Activated naive CD4-positive, alpha-beta T cell treated with anti-CD3 and anti-CD28 coated beads for 36 hours (primary cell): ENCODE measurements at regions of chr17 and their contacts with region 1.

Region 1: GRCh38 chr17:58317421-58318064 is 11.1 kb downstream of the TSPOAP1 start:
- DNase-seq: peak; percentile 88
- H3K4me3 Mint-ChIP-seq: no peak overlapping the region
- H3K27ac Mint-ChIP-seq: peak overlapping the region; percentile 81
- H3K4me1 Mint-ChIP-seq: peaks cover 11% of the 10 kb centered on the region
- H3K27me3 Mint-ChIP-seq: no peaks in the 10 kb centered on the region

Region 2: GRCh38 chr17:58303971-58304725 is 13.4 kb before region 1 on chr17:
- CTCF ChIA-PET with region 1: interaction called, 13 read pairs
- intact Hi-C with region 1: no loop called
- DNase-seq: peak; percentile 70
- H3K4me3 Mint-ChIP-seq: no peak overlapping the region
- H3K27ac Mint-ChIP-seq: no peak overlapping the region
- H3K4me1 Mint-ChIP-seq: no peaks in the 10 kb centered on the region
- H3K27me3 Mint-ChIP-seq: no peaks in the 10 kb centered on the region

Region 3: DNA sequence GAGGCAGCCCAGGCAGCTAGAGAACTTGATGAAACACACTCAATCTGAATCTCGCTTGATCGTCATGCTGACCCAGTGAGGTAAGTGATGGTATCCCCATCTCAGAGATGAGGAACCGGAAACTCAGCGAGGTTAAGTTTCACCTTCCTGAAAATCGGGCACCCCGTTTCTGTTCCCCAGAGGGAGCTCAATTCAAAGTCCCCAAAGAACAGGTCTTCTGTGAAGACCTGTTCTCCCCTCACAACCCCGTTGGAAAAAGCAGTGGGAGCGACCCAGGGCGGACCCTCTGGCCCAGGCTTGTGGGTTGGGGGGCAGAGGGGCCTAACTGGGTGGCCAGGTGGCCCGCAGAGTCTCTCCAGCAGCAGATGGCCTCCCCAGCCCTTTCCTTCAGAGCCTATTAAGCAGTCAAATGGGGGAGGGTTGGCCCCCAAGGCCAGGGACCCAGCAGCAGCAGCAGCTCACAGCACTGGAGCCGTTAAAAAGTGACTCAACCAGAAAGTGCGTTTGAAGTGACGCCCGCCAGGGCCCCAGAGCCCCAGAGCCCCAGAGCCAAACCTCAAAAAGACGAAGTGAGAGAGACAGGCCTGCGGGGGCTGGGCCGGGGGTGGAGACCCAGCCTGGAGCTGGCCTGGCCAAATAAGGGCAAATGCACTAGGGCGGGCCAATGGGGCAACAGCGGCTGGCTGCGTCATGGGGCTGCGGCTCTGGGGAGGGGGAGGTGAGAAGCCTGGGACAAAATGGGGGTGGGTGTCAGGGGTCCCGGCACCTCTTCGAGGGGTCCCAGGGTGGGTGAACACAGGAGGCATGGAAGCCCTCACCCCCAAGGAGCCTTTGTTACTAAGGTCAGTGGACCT is 20.3 kb after region 1 on chr17:
- CTCF ChIA-PET with region 1: interaction called, 31 read pairs
- intact Hi-C with region 1: loop called (anchors 1 kb)
- DNase-seq: peak; percentile 98
- H3K4me3 Mint-ChIP-seq: peak overlapping the region; percentile 92
- H3K27ac Mint-ChIP-seq: peak overlapping the region; percentile 99
- H3K4me1 Mint-ChIP-seq: peaks cover 7% of the 10 kb centered on the region
- H3K27me3 Mint-ChIP-seq: no peaks in the 10 kb centered on the region

Region 4: GRCh38 chr17:58352014-58352842 is 34.7 kb after region 1 on chr17 and contains the start of gene SUPT4H1:
- CTCF ChIA-PET with region 1: interaction called, 92 read pairs
- intact Hi-C with region 1: loop called (anchors 1 kb)
- DNase-seq: peak; percentile 92
- H3K4me3 Mint-ChIP-seq: peak within 1 kb of the TSS; percentile 100
- H3K27ac Mint-ChIP-seq: peak within 1 kb of the TSS; percentile 97
- H3K4me1 Mint-ChIP-seq: peaks cover 47% of the 10 kb centered on the region
- H3K27me3 Mint-ChIP-seq: no peaks in the 10 kb centered on the region
- total RNA-seq, gene SUPT4H1: 76.6 to 76.9 TPM

Region 5: GRCh38 chr17:58432806-58433572 is 115.4 kb after region 1 on chr17:
- CTCF ChIA-PET with region 1: interaction called, 12 read pairs
- intact Hi-C with region 1: no loop called
- DNase-seq: no peak
- H3K4me3 Mint-ChIP-seq: no peak overlapping the region
- H3K27ac Mint-ChIP-seq: no peak overlapping the region
- H3K4me1 Mint-ChIP-seq: no peaks in the 10 kb centered on the region
- H3K27me3 Mint-ChIP-seq: no peaks in the 10 kb centered on the region

Region 6: GRCh38 chr17:58575542-58575972 is 258.0 kb after region 1 on chr17:
- CTCF ChIA-PET with region 1: no interaction called
- intact Hi-C with region 1: no loop called
- DNase-seq: no peak
- H3K4me3 Mint-ChIP-seq: no peak overlapping the region
- H3K27ac Mint-ChIP-seq: no peak overlapping the region
- H3K4me1 Mint-ChIP-seq: peaks cover 3% of the 10 kb centered on the region
- H3K27me3 Mint-ChIP-seq: no peaks in the 10 kb centered on the region